ENCODE measurements at regions of chr3 and their contacts with region 1.

Region 1: GRCh38 chr3:119559441-119559963 is at the start of gene CD80:
- DNase-seq: peak; percentile 58
- ATAC-seq: peak; percentile 54
- H3K4me3 Mint-ChIP-seq: peak within 1 kb of the TSS; percentile 90
- H3K27ac Mint-ChIP-seq: peak within 1 kb of the TSS; percentile 88
- H3K4me1 Mint-ChIP-seq: peaks cover 92% of the 10 kb centered on the region
- H3K27me3 Mint-ChIP-seq: no peaks in the 10 kb centered on the region
- CTCF ChIP-seq: no peak
- total RNA-seq, gene CD80: 71.4 and 88.1 TPM in 2 replicates

Region 2: DNA sequence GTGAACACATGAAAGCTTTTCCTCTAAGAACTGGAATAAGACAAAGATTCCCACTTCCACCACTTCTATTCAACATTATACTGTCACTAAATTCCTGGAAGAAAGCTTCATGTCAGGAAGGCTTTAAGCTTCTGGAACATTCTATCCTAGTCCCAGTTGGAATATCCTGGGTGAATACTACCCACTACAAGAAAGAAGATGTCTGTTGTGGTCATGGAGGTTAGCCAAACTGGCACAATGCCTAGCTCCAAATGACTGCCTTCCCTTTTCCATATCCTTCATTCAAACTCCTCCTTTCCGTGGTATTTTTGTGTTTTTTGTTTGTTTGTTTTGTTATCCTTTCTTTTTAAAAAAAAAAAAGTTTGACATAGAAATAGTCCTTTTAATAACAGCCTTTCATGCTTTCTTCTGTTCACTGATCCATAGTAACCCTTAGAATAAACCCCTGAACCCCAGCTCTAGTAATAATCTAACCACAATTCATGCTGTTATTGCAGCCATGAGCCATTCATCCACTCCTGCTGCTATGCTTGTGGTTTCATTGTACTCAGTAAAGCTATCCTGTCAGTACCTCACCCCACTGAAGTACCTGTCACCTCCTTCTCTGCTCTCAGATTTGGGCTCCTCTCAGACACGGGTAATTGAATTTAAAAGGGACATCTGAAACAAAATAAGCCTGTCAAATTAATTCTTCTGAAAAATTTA is 972.3 kb before region 1 on chr3:
- CTCF ChIA-PET with region 1: no interaction called
- POLR2A ChIA-PET with region 1: no interaction called
- intact Hi-C with region 1: no loop called
- DNase-seq: no peak
- ATAC-seq: no peak
- H3K4me3 Mint-ChIP-seq: no peak overlapping the region
- H3K27ac Mint-ChIP-seq: no peak overlapping the region
- H3K4me1 Mint-ChIP-seq: no peaks in the 10 kb centered on the region
- H3K27me3 Mint-ChIP-seq: no peaks in the 10 kb centered on the region
- CTCF ChIP-seq: no peak

Region 3: GRCh38 chr3:119279101-119279554 is 280.4 kb before region 1 on chr3:
- CTCF ChIA-PET with region 1: interaction called, 3 read pairs
- POLR2A ChIA-PET with region 1: no interaction called
- intact Hi-C with region 1: loop called (anchors 1 kb)
- DNase-seq: no peak
- ATAC-seq: no peak
- H3K4me3 Mint-ChIP-seq: no peak overlapping the region
- H3K27ac Mint-ChIP-seq: no peak overlapping the region
- H3K4me1 Mint-ChIP-seq: peaks cover 3% of the 10 kb centered on the region
- H3K27me3 Mint-ChIP-seq: no peaks in the 10 kb centered on the region
- CTCF ChIP-seq: no peak

Region 4: DNA sequence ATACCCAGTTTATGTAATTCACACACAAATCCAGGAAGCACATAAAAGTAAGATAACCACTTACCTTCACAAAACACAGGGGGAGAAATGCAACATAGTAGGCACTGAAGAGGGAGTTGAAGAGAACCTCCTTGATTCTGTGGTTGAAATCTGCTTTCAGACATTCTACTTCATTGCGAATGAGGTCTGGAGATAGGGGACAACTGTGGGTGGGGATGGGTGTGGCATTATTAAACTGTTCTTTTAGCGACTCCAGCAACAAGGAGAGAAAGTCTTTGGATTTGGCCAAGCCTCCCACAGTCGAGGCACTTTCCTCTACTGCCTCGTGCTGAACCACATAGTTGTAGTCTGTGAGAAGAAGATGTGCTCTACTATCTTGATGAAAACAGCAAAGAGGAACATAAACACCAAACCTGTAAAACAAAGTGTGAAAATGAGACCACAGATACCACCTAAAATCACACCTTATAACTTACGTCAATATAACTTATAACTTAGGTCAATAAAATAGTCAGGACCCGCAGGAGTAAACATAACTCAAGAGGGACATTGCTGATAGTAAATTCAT is 121.7 kb before region 1 on chr3:
- CTCF ChIA-PET with region 1: no interaction called
- POLR2A ChIA-PET with region 1: no interaction called
- intact Hi-C with region 1: no loop called
- DNase-seq: no peak
- ATAC-seq: no peak
- H3K4me3 Mint-ChIP-seq: no peak overlapping the region
- H3K27ac Mint-ChIP-seq: no peak overlapping the region
- H3K4me1 Mint-ChIP-seq: no peaks in the 10 kb centered on the region
- H3K27me3 Mint-ChIP-seq: no peaks in the 10 kb centered on the region
- CTCF ChIP-seq: no peak

Region 5: GRCh38 chr3:119463171-119464169 is 96.0 kb before region 1 on chr3 and contains the start of gene TMEM39A:
- CTCF ChIA-PET with region 1: interaction called, 3 read pairs
- POLR2A ChIA-PET with region 1: interaction called, 11 read pairs
- intact Hi-C with region 1: loop called (anchors 1 kb)
- DNase-seq: peak; percentile 99
- ATAC-seq: peak; percentile 88
- H3K4me3 Mint-ChIP-seq: peak within 1 kb of the TSS; percentile 98
- H3K27ac Mint-ChIP-seq: peak within 1 kb of the TSS; percentile 97
- H3K4me1 Mint-ChIP-seq: peaks cover 34% of the 10 kb centered on the region
- H3K27me3 Mint-ChIP-seq: no peaks in the 10 kb centered on the region
- CTCF ChIP-seq: no peak
- total RNA-seq, gene TMEM39A: 33.7 and 45.6 TPM in 2 replicates

Region 6: GRCh38 chr3:119524931-119525662 is 34.4 kb before region 1 on chr3:
- CTCF ChIA-PET with region 1: interaction called, 10 read pairs
- POLR2A ChIA-PET with region 1: no interaction called
- intact Hi-C with region 1: loop called (anchors 1 kb)
- DNase-seq: no peak
- ATAC-seq: no peak
- H3K4me3 Mint-ChIP-seq: no peak overlapping the region
- H3K27ac Mint-ChIP-seq: peak overlapping the region; percentile 15
- H3K4me1 Mint-ChIP-seq: peaks cover 10% of the 10 kb centered on the region
- H3K27me3 Mint-ChIP-seq: no peaks in the 10 kb centered on the region
- CTCF ChIP-seq: no peak

Region 7: GRCh38 chr3:119628816-119629445 is 69.4 kb after region 1 on chr3:
- CTCF ChIA-PET with region 1: interaction called, 3 read pairs
- POLR2A ChIA-PET with region 1: interaction called, 18 read pairs
- intact Hi-C with region 1: loop called (anchors 1 kb)
- DNase-seq: peak; percentile 24
- ATAC-seq: peak; percentile 69
- H3K4me3 Mint-ChIP-seq: peak overlapping the region; percentile 73
- H3K27ac Mint-ChIP-seq: peak overlapping the region; percentile 97
- H3K4me1 Mint-ChIP-seq: peaks cover 70% of the 10 kb centered on the region
- H3K27me3 Mint-ChIP-seq: no peaks in the 10 kb centered on the region
- CTCF ChIP-seq: no peak

Region 8: DNA sequence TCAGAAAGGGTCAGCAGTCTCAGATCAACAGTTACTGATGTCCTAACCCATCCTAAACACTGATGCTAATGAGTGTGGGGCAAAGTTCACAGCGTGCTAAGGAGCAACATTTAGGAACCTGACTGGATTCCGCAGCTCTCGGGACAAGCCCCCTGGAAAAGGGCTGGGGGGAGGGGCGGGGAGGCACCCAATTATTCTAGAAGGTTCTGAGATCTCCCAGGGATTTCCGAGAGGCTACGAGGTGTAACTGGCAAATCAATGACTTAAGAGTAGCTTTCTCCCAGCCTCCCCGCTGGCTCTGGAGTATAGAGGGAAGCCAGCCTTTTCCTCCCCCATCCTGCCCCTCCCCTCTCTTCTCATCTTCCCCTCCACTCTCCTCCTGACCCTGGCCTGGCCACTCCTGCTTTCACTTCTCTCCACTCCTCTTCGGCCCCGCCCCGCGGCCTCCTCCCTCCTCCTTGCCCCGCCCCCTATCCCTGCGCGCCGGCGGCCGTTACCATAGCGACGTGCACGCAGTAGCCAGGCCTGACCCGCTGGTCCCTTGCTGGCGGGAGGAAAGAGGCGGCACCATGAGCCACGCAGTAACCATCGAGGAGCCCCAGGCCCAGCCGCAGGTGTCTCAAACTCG is 143.1 kb after region 1 on chr3 and contains the start of gene CFAP91:
- CTCF ChIA-PET with region 1: no interaction called
- POLR2A ChIA-PET with region 1: interaction called, 3 read pairs
- intact Hi-C with region 1: loop called (anchors 1 kb)
- DNase-seq: peak; percentile 86
- ATAC-seq: peak; percentile 92
- H3K4me3 Mint-ChIP-seq: peak within 1 kb of the TSS; percentile 86
- H3K27ac Mint-ChIP-seq: peak within 1 kb of the TSS; percentile 72
- H3K4me1 Mint-ChIP-seq: peaks cover 52% of the 10 kb centered on the region
- H3K27me3 Mint-ChIP-seq: no peaks in the 10 kb centered on the region
- CTCF ChIP-seq: no peak
- total RNA-seq, gene CFAP91: 8.5 and 12.9 TPM in 2 replicates

Measured in activated B cell treated with CpG ODN at 0.5 μM for 24 hours (primary cell).